ENCODE measurements at regions of chr17 and their contacts with region 1.

Region 1: GRCh38 chr17:1122533-1123392 is 57.0 kb downstream of the ABR start:
- DNase-seq: peak; percentile 87
- ATAC-seq: peak; percentile 99
- H3K4me3 Mint-ChIP-seq: no peak overlapping the region
- H3K27ac Mint-ChIP-seq: peak overlapping the region; percentile 30
- H3K4me1 Mint-ChIP-seq: peaks cover 2% of the 10 kb centered on the region
- H3K27me3 Mint-ChIP-seq: no peaks in the 10 kb centered on the region
- CTCF ChIP-seq: peak; percentile 92

Region 2: DNA sequence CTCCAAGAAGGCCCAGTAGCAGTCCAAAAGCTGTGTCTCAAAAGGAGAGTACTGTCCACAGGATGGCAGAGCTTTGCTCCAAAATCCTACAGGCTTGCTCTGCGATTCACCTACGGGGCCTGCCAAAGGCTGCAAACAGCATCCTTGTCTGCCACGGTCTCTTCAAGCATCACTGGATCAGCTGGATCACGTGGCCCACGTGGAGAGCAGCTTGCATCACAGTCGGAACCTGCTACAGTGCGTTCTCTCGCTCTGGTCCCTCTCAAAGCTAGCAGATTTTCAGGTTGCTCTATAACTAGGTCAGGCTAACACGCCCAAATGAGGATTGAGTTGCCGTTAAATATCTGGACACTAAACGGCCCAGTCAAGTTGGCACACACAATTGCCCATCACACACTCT is 134.2 kb before region 1 on chr17:
- CTCF ChIA-PET with region 1: no interaction called
- POLR2A ChIA-PET with region 1: no interaction called
- intact Hi-C with region 1: no loop called
- DNase-seq: no peak
- ATAC-seq: no peak
- H3K4me3 Mint-ChIP-seq: no peak overlapping the region
- H3K27ac Mint-ChIP-seq: no peak overlapping the region
- H3K4me1 Mint-ChIP-seq: no peaks in the 10 kb centered on the region
- H3K27me3 Mint-ChIP-seq: no peaks in the 10 kb centered on the region
- CTCF ChIP-seq: no peak

Region 3: DNA sequence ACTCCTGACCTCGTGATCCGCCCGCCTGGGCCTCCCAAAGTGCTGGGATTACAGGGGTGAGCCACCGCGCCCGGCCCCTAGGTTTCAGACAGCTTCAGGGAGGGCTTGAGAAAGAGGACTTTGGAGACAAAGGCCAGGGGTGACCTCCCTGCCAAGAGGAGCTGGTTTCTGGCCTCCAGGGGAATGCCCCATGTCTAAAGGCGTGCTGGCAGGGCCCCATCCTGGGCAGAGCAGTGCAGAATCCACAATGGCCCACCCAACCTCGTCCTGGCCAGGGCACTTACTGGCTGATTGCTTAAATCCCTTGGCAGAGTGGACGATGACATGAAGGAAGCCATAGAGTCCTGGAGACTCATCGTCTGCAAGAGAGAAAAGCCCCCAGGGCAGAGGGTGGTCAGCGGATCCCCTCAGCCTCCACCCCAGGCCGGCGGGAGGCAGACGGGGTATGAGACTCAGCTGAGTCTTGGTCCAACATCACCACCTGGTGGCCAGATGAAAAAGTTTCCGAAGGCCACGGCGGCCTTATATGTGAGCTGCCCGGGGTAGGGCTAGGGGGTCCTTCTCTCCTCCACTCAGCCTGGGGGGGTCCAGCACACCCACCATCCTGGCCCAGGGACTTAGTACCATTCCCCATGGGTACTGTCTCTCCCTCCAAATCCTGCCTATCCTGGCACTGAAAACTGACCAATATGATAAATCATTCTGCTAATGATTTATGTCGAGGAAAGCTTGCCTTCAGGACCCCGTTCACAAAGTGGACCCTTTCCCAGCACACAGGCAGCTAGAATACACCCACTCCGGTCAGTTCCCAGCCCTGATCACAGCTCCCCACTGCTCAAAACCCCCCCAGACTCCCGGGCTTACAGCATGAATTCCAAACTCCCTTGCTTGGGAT is 66.8 kb before region 1 on chr17:
- CTCF ChIA-PET with region 1: interaction called, 11 read pairs
- POLR2A ChIA-PET with region 1: no interaction called
- intact Hi-C with region 1: no loop called
- DNase-seq: peak; percentile 69
- ATAC-seq: peak; percentile 77
- H3K4me3 Mint-ChIP-seq: no peak overlapping the region
- H3K27ac Mint-ChIP-seq: no peak overlapping the region
- H3K4me1 Mint-ChIP-seq: peaks cover 2% of the 10 kb centered on the region
- H3K27me3 Mint-ChIP-seq: no peaks in the 10 kb centered on the region
- CTCF ChIP-seq: peak; percentile 76

Region 4: DNA sequence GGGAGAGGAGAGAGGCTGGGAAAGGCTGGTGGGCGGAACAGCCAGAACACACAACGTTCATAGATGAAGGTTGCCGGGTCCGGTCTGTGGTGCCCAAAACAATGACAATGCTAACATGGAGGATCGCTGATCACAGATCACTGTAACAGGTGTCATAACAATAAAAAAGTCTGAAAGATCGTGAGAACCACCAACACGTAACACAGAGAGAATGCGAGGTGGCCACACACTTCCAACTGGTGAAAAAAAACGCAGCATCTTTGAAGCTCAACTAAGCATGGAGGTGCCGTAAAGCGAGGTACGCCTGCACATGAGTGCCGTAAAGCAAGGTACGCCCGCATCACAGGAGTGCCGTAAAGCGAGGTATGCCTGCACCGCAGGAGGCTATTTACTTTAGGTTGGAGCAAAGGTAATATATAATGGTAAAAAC is 14.7 kb after region 1 on chr17:
- CTCF ChIA-PET with region 1: interaction called, 15 read pairs
- POLR2A ChIA-PET with region 1: no interaction called
- intact Hi-C with region 1: no loop called
- DNase-seq: peak; percentile 26
- ATAC-seq: peak; percentile 39
- H3K4me3 Mint-ChIP-seq: peak overlapping the region; percentile 16
- H3K27ac Mint-ChIP-seq: no peak overlapping the region
- H3K4me1 Mint-ChIP-seq: no peaks in the 10 kb centered on the region
- H3K27me3 Mint-ChIP-seq: no peaks in the 10 kb centered on the region
- CTCF ChIP-seq: no peak

Region 5: GRCh38 chr17:1179112-1179817 is 56.5 kb after region 1 on chr17:
- CTCF ChIA-PET with region 1: interaction called, 142 read pairs
- POLR2A ChIA-PET with region 1: no interaction called
- intact Hi-C with region 1: no loop called
- DNase-seq: peak; percentile 21
- ATAC-seq: peak; percentile 24
- H3K4me3 Mint-ChIP-seq: peak overlapping the region; percentile 67
- H3K27ac Mint-ChIP-seq: no peak overlapping the region
- H3K4me1 Mint-ChIP-seq: peaks cover 15% of the 10 kb centered on the region
- H3K27me3 Mint-ChIP-seq: peaks cover 2% of the 10 kb centered on the region
- CTCF ChIP-seq: no peak

Region 6: GRCh38 chr17:1197781-1198490 is 75.2 kb after region 1 on chr17:
- CTCF ChIA-PET with region 1: interaction called, 16 read pairs
- POLR2A ChIA-PET with region 1: no interaction called
- intact Hi-C with region 1: no loop called
- DNase-seq: peak; percentile 86
- ATAC-seq: peak; percentile 58
- H3K4me3 Mint-ChIP-seq: peak overlapping the region; percentile 35
- H3K27ac Mint-ChIP-seq: peak overlapping the region; percentile 88
- H3K4me1 Mint-ChIP-seq: peaks cover 50% of the 10 kb centered on the region
- H3K27me3 Mint-ChIP-seq: no peaks in the 10 kb centered on the region
- CTCF ChIP-seq: no peak

Region 7: GRCh38 chr17:1331708-1332107 is 208.9 kb after region 1 on chr17:
- CTCF ChIA-PET with region 1: interaction called, 15 read pairs
- POLR2A ChIA-PET with region 1: no interaction called
- intact Hi-C with region 1: loop called (anchors 5 kb)
- DNase-seq: no peak
- ATAC-seq: peak; percentile 37
- H3K4me3 Mint-ChIP-seq: no peak overlapping the region
- H3K27ac Mint-ChIP-seq: no peak overlapping the region
- H3K4me1 Mint-ChIP-seq: peaks cover 6% of the 10 kb centered on the region
- H3K27me3 Mint-ChIP-seq: peaks cover 2% of the 10 kb centered on the region
- CTCF ChIP-seq: no peak